Activated CD4-positive, alpha-beta memory T cell treated with anti-CD3 and anti-CD28 coated beads, Interleukin-2, amount 10 ng/mL, durations not matched to agents 7 days and 5 days (primary cell): ENCODE measurements at regions of chr1 and their contacts with region 1.

Region 1: DNA sequence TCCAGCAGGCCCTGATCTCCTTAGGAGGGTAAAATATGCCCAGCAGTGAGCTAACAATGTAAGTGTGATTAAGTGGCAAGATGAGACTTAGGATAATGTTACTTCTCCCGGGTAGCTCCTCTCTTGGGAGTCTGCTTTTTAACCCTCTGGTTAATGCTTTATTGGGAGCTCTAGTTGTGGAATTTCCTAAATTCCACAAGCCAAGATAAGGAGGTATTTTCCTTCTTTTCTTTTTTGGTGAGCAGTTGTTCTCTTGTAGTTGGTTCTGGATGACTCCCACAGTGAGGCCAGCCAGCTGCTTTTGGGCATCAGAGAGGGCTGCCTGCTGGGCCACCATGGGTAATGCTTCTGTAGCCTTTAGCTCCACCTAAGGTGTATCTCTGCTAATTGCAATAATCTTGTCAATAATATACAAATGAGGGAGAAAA is 19.3 kb downstream of the C1orf52 start:
- DNase-seq: no peak
- H3K4me3 Mint-ChIP-seq: no peak overlapping the region
- H3K27ac Mint-ChIP-seq: no peak overlapping the region
- H3K4me1 Mint-ChIP-seq: peaks cover 13% of the 10 kb centered on the region
- H3K27me3 Mint-ChIP-seq: peaks cover 3% of the 10 kb centered on the region

Region 2: DNA sequence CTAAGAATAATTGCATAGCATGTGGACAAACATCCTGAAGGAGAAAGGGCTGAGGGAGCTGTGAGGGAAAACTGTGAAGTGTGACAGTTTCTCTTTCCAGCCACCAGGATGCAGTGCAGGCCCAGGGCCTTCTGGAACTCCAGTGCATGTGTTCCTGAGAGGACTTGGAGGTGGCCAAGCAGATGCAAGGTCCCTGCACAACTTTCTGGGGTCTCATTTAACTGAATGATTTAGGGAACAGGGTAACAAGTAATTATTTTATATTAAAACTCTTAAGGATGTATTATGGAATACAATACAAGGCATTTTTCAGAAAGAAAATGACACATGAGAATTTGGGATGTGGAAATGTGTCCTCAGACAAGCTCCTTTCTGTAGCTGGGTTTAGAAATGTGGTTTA is 130.7 kb before region 1 on chr1:
- CTCF ChIA-PET with region 1: interaction called, 17 read pairs
- POLR2A ChIA-PET with region 1: no interaction called
- DNase-seq: peak; percentile 31
- H3K4me3 Mint-ChIP-seq: no peak overlapping the region
- H3K27ac Mint-ChIP-seq: no peak overlapping the region
- H3K4me1 Mint-ChIP-seq: no peaks in the 10 kb centered on the region
- H3K27me3 Mint-ChIP-seq: peaks cover 11% of the 10 kb centered on the region

Region 3: DNA sequence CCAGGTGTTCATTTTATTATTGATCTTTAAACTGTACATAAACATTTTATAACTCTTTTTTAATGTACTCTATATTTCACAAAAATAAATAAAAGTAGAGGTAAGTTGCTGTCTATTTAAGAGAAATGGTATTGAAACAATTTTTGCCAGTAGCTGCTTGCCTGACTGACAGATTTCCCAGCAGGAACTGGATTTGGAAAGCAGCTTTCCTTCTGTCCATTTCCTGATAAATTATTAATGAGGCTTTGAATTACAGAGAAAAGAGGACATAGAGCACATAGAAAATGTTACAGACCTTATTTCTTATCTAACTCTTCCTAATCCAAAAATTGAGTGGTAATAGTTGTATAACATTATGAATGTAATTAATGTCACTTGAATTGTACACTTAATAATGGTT is 115.9 kb after region 1 on chr1:
- CTCF ChIA-PET with region 1: no interaction called
- POLR2A ChIA-PET with region 1: no interaction called
- DNase-seq: no peak
- H3K4me3 Mint-ChIP-seq: no peak overlapping the region
- H3K27ac Mint-ChIP-seq: no peak overlapping the region
- H3K4me1 Mint-ChIP-seq: no peaks in the 10 kb centered on the region
- H3K27me3 Mint-ChIP-seq: peaks cover 12% of the 10 kb centered on the region